A673 (cell line): ENCODE measurements at regions of chr11 and their contacts with region 1.

Region 1: DNA sequence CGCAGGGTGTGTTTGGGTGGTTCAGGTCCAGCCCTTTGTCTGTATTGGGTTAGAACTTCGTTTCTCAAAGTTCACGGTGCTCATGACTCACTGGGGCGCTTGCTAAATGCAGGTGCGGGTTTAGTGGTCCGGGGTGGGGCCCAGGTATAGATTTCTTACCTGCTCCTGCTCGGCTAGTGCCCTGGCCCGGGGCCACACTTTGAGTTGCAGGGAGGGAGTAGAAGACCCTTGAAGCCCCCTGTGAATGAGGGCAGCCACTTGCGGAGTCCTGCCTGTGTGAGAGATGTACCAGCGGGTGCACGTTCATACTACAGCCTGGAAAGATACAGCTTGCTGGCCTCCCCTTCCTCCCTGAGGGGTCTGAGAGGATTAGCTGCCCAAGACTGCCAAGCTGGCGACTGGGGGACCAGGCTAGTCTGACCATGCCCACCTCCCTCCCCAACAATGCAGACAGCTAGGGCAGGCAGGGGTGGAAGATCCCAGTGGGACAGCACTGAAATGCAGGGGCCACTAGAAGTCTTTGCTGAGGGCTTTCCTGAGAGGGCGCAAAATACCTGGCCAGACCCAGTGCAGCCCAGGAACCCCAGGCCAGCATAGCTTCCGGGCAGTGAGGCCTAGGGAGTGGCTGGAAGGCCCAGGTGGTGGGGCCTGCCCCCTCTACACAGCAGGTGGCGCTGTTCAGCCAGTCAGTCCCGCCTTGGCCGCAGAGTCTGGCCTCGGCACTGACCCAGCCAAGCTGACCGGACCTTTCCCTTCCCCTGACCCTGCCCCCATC is 5.1 kb upstream of the MYRF start:
- DNase-seq: peak; percentile 55
- H3K4me3 ChIP-seq: no peak overlapping the region
- H3K27ac ChIP-seq: no peak overlapping the region
- H3K4me1 ChIP-seq: no peaks in the 10 kb centered on the region
- H3K27me3 ChIP-seq: no peaks in the 10 kb centered on the region
- CTCF ChIP-seq: peak; percentile 99

Region 2: GRCh38 chr11:61529537-61530225 is 217.7 kb before region 1 on chr11:
- CTCF ChIA-PET with region 1: no interaction called
- POLR2A ChIA-PET with region 1: no interaction called
- intact Hi-C with region 1: no loop called
- DNase-seq: no peak
- H3K4me3 ChIP-seq: no peak overlapping the region
- H3K27ac ChIP-seq: no peak overlapping the region
- H3K4me1 ChIP-seq: no peaks in the 10 kb centered on the region
- H3K27me3 ChIP-seq: peaks cover 5% of the 10 kb centered on the region
- CTCF ChIP-seq: no peak

Region 3: DNA sequence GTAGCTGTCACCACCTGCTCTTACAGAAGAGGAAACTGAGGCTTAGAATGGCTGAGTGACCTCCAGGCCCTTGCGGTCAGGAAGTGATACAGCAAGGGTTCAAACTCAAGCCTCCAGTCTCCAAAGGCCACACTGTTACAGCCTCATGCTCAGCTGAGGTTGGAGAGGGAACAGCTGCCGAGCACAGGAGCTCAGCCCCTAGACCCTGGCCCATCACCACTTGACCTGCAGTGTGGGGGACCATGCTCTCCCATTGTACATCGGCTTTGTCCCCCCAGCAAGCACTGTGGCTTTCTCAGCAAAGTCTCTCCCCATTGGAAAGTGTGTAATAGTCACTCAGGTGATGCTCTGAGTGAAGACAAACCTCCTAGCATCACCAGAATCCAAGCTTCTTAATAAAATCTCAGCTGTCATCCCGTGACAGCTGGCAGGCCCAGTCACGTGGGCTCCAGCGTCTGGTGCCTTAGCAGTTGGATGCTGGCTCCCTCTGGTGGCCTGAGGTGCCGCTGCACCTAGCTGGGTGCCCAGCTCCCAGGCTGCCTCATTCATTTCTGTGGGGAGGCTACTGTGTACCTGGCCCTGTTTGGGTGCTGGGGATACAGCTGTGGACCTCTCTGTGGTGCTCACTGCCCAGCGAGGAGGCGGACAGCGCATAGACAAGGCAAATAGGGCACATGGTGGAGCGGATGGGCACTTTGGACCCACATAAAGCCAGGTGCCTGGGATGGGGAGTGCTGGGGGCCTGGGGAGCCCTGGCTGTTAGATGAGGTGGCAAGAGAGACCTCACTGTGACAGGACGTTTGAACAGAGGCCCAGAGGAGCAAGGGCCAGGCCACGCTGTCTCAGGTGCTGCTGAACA is 14.0 kb before region 1 on chr11:
- CTCF ChIA-PET with region 1: interaction called, 10 read pairs
- POLR2A ChIA-PET with region 1: no interaction called
- intact Hi-C with region 1: no loop called
- DNase-seq: peak; percentile 93
- H3K4me3 ChIP-seq: no peak overlapping the region
- H3K27ac ChIP-seq: no peak overlapping the region
- H3K4me1 ChIP-seq: no peaks in the 10 kb centered on the region
- H3K27me3 ChIP-seq: no peaks in the 10 kb centered on the region
- CTCF ChIP-seq: peak; percentile 100

Region 4: DNA sequence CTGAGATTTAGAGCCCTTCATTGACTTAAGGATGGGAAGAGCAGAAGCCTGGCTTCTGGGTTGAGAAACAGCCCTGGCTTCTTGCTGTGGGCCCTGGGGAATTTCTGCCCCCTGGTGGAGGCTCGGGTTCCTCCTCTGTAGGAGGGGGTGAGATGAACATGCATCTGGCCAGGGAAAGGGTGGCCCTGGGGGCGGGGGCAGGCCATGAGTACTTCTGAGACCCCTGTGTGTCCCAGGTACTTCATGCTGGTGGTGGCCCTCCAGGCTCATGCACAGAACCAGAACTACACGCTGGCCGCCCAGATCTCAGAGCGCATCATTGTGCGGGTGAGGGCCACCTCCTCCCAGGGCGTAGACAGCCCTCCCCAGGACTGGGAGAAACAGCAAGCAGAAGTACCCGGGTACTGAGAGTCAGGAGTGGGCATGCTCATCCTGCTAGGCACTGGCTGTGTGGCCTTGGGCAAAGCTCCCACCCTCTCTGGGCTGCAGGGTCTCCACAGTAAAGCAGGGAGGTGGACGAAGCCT is 29.2 kb after region 1 on chr11:
- CTCF ChIA-PET with region 1: interaction called, 5 read pairs
- POLR2A ChIA-PET with region 1: no interaction called
- intact Hi-C with region 1: loop called (anchors 2 kb)
- DNase-seq: peak; percentile 78
- H3K4me3 ChIP-seq: no peak overlapping the region
- H3K27ac ChIP-seq: no peak overlapping the region
- H3K4me1 ChIP-seq: peaks cover 10% of the 10 kb centered on the region
- H3K27me3 ChIP-seq: no peaks in the 10 kb centered on the region
- CTCF ChIP-seq: peak; percentile 83

Region 5: GRCh38 chr11:61787928-61788491 is 40.6 kb after region 1 on chr11:
- CTCF ChIA-PET with region 1: interaction called, 7 read pairs
- POLR2A ChIA-PET with region 1: no interaction called
- intact Hi-C with region 1: loop called (anchors 2 kb)
- DNase-seq: peak; percentile 83
- H3K4me3 ChIP-seq: no peak overlapping the region
- H3K27ac ChIP-seq: no peak overlapping the region
- H3K4me1 ChIP-seq: peaks cover 7% of the 10 kb centered on the region
- H3K27me3 ChIP-seq: no peaks in the 10 kb centered on the region
- CTCF ChIP-seq: peak; percentile 80

Region 6: DNA sequence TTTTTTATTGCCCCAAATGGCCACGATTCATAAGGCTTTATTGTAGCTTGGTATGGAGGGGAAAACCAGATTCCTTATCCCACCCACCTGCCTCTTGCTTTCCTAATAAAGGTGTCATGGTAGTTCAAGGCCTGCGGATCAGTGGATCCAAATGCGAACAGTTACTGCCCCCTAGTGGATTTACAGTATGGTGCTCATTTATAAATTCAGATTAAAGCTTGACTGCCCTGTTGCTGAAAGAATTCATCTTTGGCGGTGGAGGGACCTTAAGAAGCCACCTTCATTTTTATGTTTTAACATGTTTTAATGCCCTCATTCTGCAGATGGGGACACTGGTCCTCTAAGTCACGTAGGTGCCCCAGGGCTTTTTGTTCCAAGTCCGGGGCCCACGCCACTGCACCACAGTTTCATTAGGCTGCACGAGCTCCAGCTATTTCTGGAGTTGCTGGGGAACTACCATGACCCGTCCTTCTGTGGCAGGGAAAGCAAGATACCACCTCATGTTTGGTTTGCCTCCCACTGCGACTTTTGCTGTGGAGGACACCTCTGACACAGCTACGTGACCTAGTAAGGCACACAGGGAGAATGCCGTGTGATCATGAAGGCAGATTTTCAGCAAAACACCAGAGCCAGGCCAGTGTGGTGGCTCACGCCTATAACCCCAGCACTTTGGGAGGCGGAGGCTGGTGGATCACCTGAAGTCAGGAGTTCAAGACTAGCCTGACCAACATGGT is 360.8 kb after region 1 on chr11:
- CTCF ChIA-PET with region 1: interaction called, 6 read pairs
- POLR2A ChIA-PET with region 1: no interaction called
- intact Hi-C with region 1: loop called (anchors 2 kb)
- DNase-seq: peak; percentile 84
- H3K4me3 ChIP-seq: no peak overlapping the region
- H3K27ac ChIP-seq: no peak overlapping the region
- H3K4me1 ChIP-seq: peaks cover 3% of the 10 kb centered on the region
- H3K27me3 ChIP-seq: no peaks in the 10 kb centered on the region
- CTCF ChIP-seq: peak; percentile 91